Endothelial cell of umbilical vein (primary cell): ENCODE measurements at regions of chr13 and their contacts with region 1.

Region 1: GRCh38 chr13:56561327-56561726 is 579.4 kb upstream of the PRR20A start:
- DNase-seq: peak; percentile 35
- H3K4me3 ChIP-seq: no peak overlapping the region
- H3K27ac ChIP-seq: no peak overlapping the region
- H3K4me1 ChIP-seq: no peaks in the 10 kb centered on the region
- H3K27me3 ChIP-seq: no peaks in the 10 kb centered on the region
- CTCF ChIP-seq: peak; percentile 20 to 39
- POLR2A ChIP-seq: no peak

Region 2: DNA sequence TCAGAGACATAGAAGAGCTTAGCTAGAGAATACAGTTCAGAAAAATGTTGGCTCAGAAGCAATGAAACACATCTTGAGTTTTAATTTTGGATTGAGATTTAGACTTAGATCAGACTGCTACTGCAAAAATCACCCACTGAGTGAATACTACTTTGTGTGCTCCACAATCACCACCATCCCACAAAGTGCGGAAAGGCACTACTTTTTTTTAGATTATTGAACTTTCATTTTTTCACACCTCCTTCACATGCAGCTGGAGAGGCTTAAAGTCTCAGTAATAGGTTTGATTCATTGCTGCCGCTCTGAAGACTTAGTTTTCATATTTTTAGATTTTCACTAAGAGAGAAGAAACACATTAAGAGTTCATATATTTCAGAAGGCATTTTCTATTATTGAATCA is 289.5 kb after region 1 on chr13:
- CTCF ChIA-PET with region 1: no interaction called
- POLR2A ChIA-PET with region 1: no interaction called
- dilution Hi-C with region 1: no loop called
- intact Hi-C with region 1: no loop called
- DNase-seq: no peak
- H3K4me3 ChIP-seq: no peak overlapping the region
- H3K27ac ChIP-seq: no peak overlapping the region
- H3K4me1 ChIP-seq: no peaks in the 10 kb centered on the region
- H3K27me3 ChIP-seq: no peaks in the 10 kb centered on the region
- CTCF ChIP-seq: no peak
- POLR2A ChIP-seq: no peak

Region 3: DNA sequence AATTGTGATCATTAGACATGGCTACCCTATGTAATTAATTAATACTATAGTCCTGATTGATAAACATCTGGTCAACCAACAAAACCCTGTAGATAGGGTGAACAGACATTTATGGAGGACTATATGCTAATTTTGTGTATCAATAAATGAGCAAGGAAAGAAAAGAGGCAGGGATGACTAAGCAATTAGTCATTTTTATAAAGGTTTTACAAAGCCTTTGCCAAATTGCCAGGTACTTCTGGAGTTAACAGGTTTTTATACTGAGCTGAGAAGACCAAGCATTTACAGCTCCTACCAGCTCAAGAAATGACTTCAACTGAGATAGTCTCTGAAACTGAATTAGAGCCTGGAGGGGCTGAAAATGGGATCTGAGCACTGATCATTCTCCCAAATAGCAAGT is 392.6 kb after region 1 on chr13:
- CTCF ChIA-PET with region 1: no interaction called
- POLR2A ChIA-PET with region 1: no interaction called
- dilution Hi-C with region 1: no loop called
- intact Hi-C with region 1: no loop called
- DNase-seq: no peak
- H3K4me3 ChIP-seq: no peak overlapping the region
- H3K27ac ChIP-seq: no peak overlapping the region
- H3K4me1 ChIP-seq: no peaks in the 10 kb centered on the region
- H3K27me3 ChIP-seq: no peaks in the 10 kb centered on the region
- CTCF ChIP-seq: no peak
- POLR2A ChIP-seq: no peak

Region 4: DNA sequence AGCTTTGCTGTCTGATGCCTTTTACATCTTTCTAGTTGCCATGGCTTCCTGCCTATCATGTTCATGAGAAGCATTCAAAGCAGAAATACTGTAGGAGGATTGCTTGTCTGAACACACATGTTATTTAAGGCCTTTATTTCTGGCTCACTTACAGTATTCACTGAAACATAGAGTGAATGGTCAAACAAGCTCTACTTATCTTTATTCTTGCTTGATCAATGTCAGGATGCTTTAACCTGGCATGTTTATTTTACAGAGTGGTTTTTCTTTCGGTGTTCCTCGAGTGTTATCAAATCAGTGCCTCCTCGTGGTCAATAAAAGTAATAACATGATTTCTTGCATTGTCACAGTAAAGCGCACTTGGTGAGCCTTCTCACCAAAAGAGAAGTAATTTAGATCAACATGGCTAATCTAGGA is 996.7 kb after region 1 on chr13:
- CTCF ChIA-PET with region 1: no interaction called
- POLR2A ChIA-PET with region 1: no interaction called
- dilution Hi-C with region 1: no loop called
- intact Hi-C with region 1: loop called (anchors 1 kb)
- DNase-seq: peak; percentile 54
- H3K4me3 ChIP-seq: no peak overlapping the region
- H3K27ac ChIP-seq: no peak overlapping the region
- H3K4me1 ChIP-seq: no peaks in the 10 kb centered on the region
- H3K27me3 ChIP-seq: no peaks in the 10 kb centered on the region
- CTCF ChIP-seq: peak; percentile 22 to 28
- POLR2A ChIP-seq: no peak